Head of caudate nucleus (tissue), 42 donors: ENCODE measurements at regions of chr14 and their contacts with region 1.

Region 1: DNA sequence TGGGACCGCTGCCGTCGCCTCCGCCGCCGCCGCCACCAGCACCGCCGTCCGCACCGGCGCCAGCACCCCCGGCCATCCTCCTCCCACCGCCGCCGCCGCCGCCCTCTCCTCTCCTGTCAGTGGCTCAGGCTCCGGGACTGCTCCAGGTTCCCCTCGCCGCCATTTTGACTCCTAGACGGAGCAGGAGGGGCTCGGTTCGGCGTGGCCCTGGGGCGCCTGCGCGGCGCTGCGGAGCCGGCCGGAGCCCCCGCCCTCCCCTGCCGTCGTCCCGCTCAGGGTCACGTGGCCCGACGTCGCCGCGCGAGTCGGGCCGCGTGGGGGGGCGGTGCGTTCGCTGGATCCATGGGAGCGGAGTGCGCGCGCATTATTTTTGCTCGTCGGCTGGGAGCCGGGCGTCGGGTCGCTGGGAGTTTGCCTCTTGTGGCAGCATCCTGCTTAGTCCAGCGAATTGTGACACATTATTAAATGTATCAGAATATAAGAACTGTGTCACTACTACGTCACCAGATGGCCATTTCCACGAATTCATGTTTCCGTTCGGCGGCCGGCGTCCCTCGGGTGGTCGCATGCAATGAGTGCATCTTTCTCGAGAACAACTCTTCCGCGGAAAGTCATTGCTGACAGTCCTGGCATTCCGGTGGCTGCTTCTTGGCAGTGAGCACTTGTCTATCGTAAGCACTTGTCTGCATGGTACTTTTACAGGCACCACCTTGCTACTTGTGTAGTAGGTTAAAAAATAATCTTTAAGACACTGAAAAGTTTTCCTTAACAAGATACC is at the start of gene BTBD7:
- DNase-seq: peak; percentile 81 to 98 (median 95)

Region 2: GRCh38 chr14:93301821-93302447 is 31.1 kb before region 1 on chr14:
- intact Hi-C with region 1: no loop called
- DNase-seq: no peak

Region 3: GRCh38 chr14:93381644-93382043 is 48.6 kb after region 1 on chr14:
- intact Hi-C with region 1: loop called (anchors 10 kb)
- DNase-seq: no peak

Region 4: DNA sequence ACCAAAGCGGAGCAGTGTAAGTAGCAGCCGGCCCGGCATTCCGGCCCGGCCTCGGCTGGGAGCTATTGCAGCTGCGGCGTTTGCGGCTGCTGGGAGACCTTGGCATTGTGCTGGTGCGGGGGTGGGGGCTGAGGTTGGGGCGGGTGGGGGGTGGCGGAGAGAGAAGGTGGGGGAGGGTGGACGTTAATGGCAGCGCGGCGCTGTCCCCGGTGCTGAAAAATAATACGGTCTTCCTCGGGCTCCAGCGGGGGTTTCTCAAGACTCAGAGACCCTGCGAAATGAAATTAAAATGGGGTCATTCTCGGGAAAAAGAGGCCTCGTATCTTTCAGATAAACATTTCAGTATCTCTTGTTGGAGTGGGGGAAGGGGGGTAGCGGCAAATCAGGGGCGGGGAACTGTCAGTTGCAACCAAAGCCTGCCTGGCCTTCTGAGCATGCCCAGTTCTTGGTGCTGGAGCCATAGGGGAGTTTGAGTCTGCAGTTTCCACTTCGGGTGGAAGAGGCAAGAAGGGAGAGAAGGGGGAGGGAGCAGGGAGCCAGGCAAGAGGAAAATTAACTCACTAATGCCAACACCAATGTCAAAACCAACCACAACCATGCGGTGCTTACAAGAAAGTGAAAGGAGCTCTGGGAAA is 98.1 kb after region 1 on chr14:
- intact Hi-C with region 1: loop called (anchors 5 kb)
- DNase-seq: peak; percentile 64 to 93 (median 83)